Colonic mucosa (tissue), 4 donors: ENCODE measurements at regions of chr6 and their contacts with region 1.

Region 1: GRCh38 chr6:20212392-20213217 is at the start of gene MBOAT1:
- DNase-seq: peak; percentile 93
- H3K4me3 ChIP-seq: peak within 1 kb of the TSS; percentile 75
- H3K27ac ChIP-seq: peak within 1 kb of the TSS; percentile 96
- H3K4me1 ChIP-seq: peaks cover 25% of the 10 kb centered on the region
- H3K27me3 ChIP-seq: no peaks in the 10 kb centered on the region
- CTCF ChIP-seq: no peak
- total RNA-seq, gene MBOAT1: 45.7 to 54.1 TPM

Region 2: DNA sequence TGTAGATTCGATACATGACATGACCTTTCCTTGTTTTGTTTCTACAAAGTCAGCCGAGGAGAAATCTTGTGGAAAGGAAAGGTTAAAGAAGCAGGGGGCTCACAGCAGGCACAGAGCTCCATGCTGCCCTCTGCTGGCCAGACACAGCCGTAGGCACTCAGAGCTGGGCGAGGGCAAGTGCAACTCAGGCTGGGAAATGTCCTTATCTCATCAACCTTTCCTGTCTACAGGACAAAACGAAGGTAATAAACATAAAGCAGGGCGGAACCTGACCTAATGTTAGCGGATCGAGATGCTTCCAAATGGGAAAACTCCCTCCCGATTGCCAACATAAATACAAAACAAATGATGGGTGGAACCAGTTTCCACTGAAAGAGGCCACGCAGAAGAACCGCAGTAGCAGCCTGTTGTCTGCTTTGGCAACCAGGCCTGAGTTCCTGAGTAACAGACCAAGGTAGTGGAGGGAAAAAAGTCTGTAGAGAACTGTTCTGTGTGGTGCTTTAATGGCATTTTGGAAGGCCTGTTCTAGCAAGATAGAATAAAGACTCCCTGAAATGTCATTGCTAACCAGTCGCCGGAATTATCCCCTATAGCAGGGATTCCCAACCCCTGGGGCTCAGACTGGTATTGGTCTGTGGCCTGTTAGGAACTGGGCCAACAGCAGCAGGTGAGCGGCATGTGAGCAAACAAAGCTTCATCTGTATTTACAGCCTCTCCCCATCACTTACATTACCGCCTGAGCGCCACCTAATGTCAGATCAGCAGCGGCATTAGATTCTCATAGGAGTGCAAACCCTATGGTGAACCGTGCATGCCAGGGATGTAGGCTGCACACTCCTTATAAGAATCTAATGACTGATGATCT is 85.6 kb before region 1 on chr6:
- intact Hi-C with region 1: loop called (anchors 10 kb)
- DNase-seq: peak; percentile 83
- H3K4me3 ChIP-seq: no peak overlapping the region
- H3K27ac ChIP-seq: peak overlapping the region; percentile 60
- H3K4me1 ChIP-seq: peaks cover 3% of the 10 kb centered on the region
- H3K27me3 ChIP-seq: no peaks in the 10 kb centered on the region
- CTCF ChIP-seq: peak; percentile 93